B cell (primary cell): ENCODE measurements at regions of chr2 and their contacts with region 1.

Region 1: GRCh38 chr2:112726497-112727190 is 5.8 kb downstream of the NT5DC4 start:
- DNase-seq: peak; percentile 94
- ATAC-seq: peak; percentile 91
- H3K4me3 ChIP-seq: no peak overlapping the region
- H3K4me3 Mint-ChIP-seq: peak overlapping the region; percentile 80
- H3K27ac ChIP-seq: no peak overlapping the region
- H3K27ac Mint-ChIP-seq: peak overlapping the region; percentile 88
- H3K4me1 ChIP-seq: peaks cover 8 to 25% of the 10 kb centered on the region in 2 donors
- H3K4me1 Mint-ChIP-seq: peaks cover 17% of the 10 kb centered on the region
- H3K27me3 ChIP-seq: no peaks in the 10 kb centered on the region
- H3K27me3 Mint-ChIP-seq: no peaks in the 10 kb centered on the region
- CTCF ChIP-seq: peak; percentile 94

Region 2: DNA sequence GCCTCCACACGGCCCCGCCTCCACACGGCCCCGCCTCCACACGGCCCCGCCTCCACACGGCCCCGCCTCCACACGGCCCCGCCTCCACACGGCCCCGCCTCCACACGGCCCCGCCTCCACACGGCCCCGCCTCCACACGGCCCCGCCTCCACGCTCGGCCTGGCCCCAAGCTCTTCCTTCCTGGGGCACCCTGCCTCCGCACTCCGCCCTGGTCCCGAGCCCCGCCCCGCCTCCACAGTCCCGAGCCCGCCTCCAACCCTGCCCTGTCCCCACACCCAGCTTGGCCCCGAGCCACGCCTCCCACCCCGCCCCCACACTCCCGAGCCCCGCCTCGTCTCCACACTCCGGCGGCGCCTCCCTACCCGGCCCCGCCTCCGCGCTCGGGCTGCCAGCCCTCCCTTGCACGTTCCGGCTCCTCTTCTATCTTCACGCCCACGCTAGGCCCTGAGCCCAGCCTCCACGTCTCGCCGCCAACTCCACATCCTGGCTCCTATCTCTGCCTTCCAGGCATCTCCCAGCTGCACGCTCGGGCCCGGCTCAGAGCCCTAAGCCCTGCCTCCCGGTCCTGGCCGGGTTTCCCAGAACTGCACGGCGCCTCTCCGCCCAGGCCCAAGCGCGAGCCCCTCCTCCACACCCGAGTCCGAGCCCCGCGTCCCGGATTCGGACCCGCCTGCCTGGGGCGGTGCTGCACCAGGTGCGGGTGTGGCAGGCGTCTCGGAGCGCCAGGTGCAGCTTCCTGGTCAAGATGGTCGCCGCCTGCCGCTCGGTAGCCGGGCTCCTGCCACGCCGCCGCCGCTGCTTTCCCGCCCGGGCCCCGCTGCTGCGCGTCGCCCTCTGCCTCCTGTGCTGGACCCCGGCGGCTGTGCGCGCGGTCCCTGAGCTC is 671.6 kb before region 1 on chr2 and contains the start of gene TMEM87B:
- CTCF ChIA-PET with region 1: no interaction called
- POLR2A ChIA-PET with region 1: no interaction called
- intact Hi-C with region 1: loop called (anchors 10 kb)
- DNase-seq: peak; percentile 97
- ATAC-seq: peak; percentile 70
- H3K4me3 ChIP-seq: peak within 1 kb of the TSS; percentile 47 to 94 (median 87)
- H3K4me3 Mint-ChIP-seq: peak within 1 kb of the TSS; percentile 99
- H3K27ac ChIP-seq: peak within 1 kb of the TSS; percentile 80 to 87
- H3K27ac Mint-ChIP-seq: peak within 1 kb of the TSS; percentile 98
- H3K4me1 ChIP-seq: peaks cover 18 to 19% of the 10 kb centered on the region in 2 donors
- H3K4me1 Mint-ChIP-seq: peaks cover 41% of the 10 kb centered on the region
- H3K27me3 ChIP-seq: no peaks in the 10 kb centered on the region
- H3K27me3 Mint-ChIP-seq: no peaks in the 10 kb centered on the region
- CTCF ChIP-seq: no peak
- total RNA-seq, gene TMEM87B: 21.0 and 21.1 TPM in 2 replicates

Region 3: GRCh38 chr2:112542123-112542983 is 184.3 kb before region 1 on chr2 and contains the start of gene POLR1B:
- CTCF ChIA-PET with region 1: interaction called, 3 read pairs
- POLR2A ChIA-PET with region 1: no interaction called
- intact Hi-C with region 1: loop called (anchors 1 kb)
- DNase-seq: peak; percentile 88
- ATAC-seq: peak; percentile 80
- H3K4me3 ChIP-seq: peak within 1 kb of the TSS; percentile 65 to 99 (median 94)
- H3K4me3 Mint-ChIP-seq: no peak within 1 kb of the TSS
- H3K27ac ChIP-seq: peak within 1 kb of the TSS; percentile 85 to 94
- H3K27ac Mint-ChIP-seq: no peak within 1 kb of the TSS
- H3K4me1 ChIP-seq: peaks cover 15 to 18% of the 10 kb centered on the region in 2 donors
- H3K4me1 Mint-ChIP-seq: peaks cover 15% of the 10 kb centered on the region
- H3K27me3 ChIP-seq: no peaks in the 10 kb centered on the region
- H3K27me3 Mint-ChIP-seq: no peaks in the 10 kb centered on the region
- CTCF ChIP-seq: no peak
- total RNA-seq, gene POLR1B: 32.5 and 34.2 TPM in 2 replicates

Region 4: GRCh38 chr2:112626604-112627059 is 100.0 kb before region 1 on chr2:
- CTCF ChIA-PET with region 1: interaction called, 496 read pairs
- POLR2A ChIA-PET with region 1: interaction called, 7 read pairs
- intact Hi-C with region 1: no loop called
- DNase-seq: peak; percentile 82
- ATAC-seq: peak; percentile 79
- H3K4me3 ChIP-seq: peak overlapping the region in 3 of 5 experiments; percentile 39 to 59 (median 46)
- H3K4me3 Mint-ChIP-seq: peak overlapping the region; percentile 56
- H3K27ac ChIP-seq: no peak overlapping the region
- H3K27ac Mint-ChIP-seq: no peak overlapping the region
- H3K4me1 ChIP-seq: peaks cover 15 to 39% of the 10 kb centered on the region in 2 donors
- H3K4me1 Mint-ChIP-seq: peaks cover 23% of the 10 kb centered on the region
- H3K27me3 ChIP-seq: no peaks in the 10 kb centered on the region
- H3K27me3 Mint-ChIP-seq: no peaks in the 10 kb centered on the region
- CTCF ChIP-seq: peak; percentile 89

Region 5: GRCh38 chr2:112685271-112685884 is 41.3 kb before region 1 on chr2:
- CTCF ChIA-PET with region 1: interaction called, 56 read pairs
- POLR2A ChIA-PET with region 1: interaction called, 3 read pairs
- intact Hi-C with region 1: loop called (anchors 5 kb)
- DNase-seq: no peak
- ATAC-seq: no peak
- H3K4me3 ChIP-seq: no peak overlapping the region
- H3K4me3 Mint-ChIP-seq: no peak overlapping the region
- H3K27ac ChIP-seq: no peak overlapping the region
- H3K27ac Mint-ChIP-seq: no peak overlapping the region
- H3K4me1 ChIP-seq: peaks cover 5 to 17% of the 10 kb centered on the region in 2 donors
- H3K4me1 Mint-ChIP-seq: peaks cover 13% of the 10 kb centered on the region
- H3K27me3 ChIP-seq: no peaks in the 10 kb centered on the region
- H3K27me3 Mint-ChIP-seq: no peaks in the 10 kb centered on the region
- CTCF ChIP-seq: peak; percentile 25

Region 6: GRCh38 chr2:112701052-112701451 is 25.6 kb before region 1 on chr2:
- CTCF ChIA-PET with region 1: interaction called, 67 read pairs
- POLR2A ChIA-PET with region 1: interaction called, 5 read pairs
- intact Hi-C with region 1: no loop called
- DNase-seq: peak; percentile 44
- ATAC-seq: peak; percentile 35
- H3K4me3 ChIP-seq: no peak overlapping the region
- H3K4me3 Mint-ChIP-seq: peak overlapping the region; percentile 21
- H3K27ac ChIP-seq: peak overlapping the region; percentile 62 to 70
- H3K27ac Mint-ChIP-seq: peak overlapping the region; percentile 50
- H3K4me1 ChIP-seq: peaks cover 40 to 48% of the 10 kb centered on the region in 2 donors
- H3K4me1 Mint-ChIP-seq: peaks cover 52% of the 10 kb centered on the region
- H3K27me3 ChIP-seq: no peaks in the 10 kb centered on the region
- H3K27me3 Mint-ChIP-seq: no peaks in the 10 kb centered on the region
- CTCF ChIP-seq: no peak

Region 7: DNA sequence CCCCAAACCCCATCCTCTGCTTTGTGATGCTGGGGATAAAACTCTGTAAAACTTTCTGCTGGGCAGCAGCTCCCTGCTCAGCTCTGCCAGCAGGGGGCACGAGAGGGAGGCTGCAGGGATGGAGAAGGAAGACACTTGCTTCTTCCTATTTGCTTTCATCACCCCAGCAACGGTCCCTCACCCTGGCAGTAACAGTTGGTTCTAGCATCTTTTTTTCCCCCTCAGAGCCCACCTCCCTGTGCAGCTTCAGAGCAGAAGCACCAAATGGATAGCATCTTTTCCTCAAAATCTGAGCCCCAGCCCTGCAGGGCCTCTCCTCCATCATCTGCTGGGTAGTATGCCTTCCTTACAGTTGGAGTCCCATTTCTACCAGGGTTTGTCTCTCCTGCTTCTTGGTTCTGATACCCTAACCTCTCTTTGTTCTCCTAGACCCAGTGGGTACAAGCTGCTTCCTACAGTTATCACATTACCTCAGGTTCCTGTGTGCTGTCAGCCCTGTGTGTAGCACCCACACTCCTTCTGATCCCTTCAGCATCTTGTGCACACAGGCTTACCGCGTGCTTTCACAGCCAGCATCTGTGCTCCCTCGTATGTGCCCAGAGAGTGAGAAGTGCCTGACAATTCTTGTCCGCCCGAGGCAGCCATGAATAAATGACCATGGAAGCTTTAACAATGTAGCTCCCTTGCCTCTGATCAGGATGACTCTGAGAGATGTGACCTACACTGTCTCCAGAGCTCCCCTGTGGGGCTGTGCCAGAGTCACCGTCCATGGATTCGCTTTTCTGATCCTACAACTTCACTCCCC is 23.3 kb after region 1 on chr2:
- CTCF ChIA-PET with region 1: interaction called, 18 read pairs
- POLR2A ChIA-PET with region 1: no interaction called
- intact Hi-C with region 1: no loop called
- DNase-seq: peak; percentile 82
- ATAC-seq: peak; percentile 93
- H3K4me3 ChIP-seq: no peak overlapping the region
- H3K4me3 Mint-ChIP-seq: no peak overlapping the region
- H3K27ac ChIP-seq: no peak overlapping the region
- H3K27ac Mint-ChIP-seq: peak overlapping the region; percentile 21
- H3K4me1 ChIP-seq: peaks cover 0 to 11% of the 10 kb centered on the region in 2 donors
- H3K4me1 Mint-ChIP-seq: peaks cover 13% of the 10 kb centered on the region
- H3K27me3 ChIP-seq: no peaks in the 10 kb centered on the region
- H3K27me3 Mint-ChIP-seq: no peaks in the 10 kb centered on the region
- CTCF ChIP-seq: peak; percentile 96

Region 8: GRCh38 chr2:112958428-112959108 is 231.9 kb after region 1 on chr2:
- CTCF ChIA-PET with region 1: no interaction called
- POLR2A ChIA-PET with region 1: no interaction called
- intact Hi-C with region 1: no loop called
- DNase-seq: peak; percentile 61
- ATAC-seq: peak; percentile 67
- H3K4me3 ChIP-seq: no peak overlapping the region
- H3K4me3 Mint-ChIP-seq: no peak overlapping the region
- H3K27ac ChIP-seq: no peak overlapping the region
- H3K27ac Mint-ChIP-seq: no peak overlapping the region
- H3K4me1 ChIP-seq: no peaks in the 10 kb centered on the region
- H3K4me1 Mint-ChIP-seq: no peaks in the 10 kb centered on the region
- H3K27me3 ChIP-seq: peaks cover 0 to 15% (median 0%) of the 10 kb centered on the region in 4 experiments
- H3K27me3 Mint-ChIP-seq: peaks cover 4% of the 10 kb centered on the region
- CTCF ChIP-seq: peak; percentile 88